ENCODE measurements at regions of chr15 and their contacts with region 1.

Region 1: GRCh38 chr15:61921093-61921492 is 139.2 kb downstream of the VPS13C start:
- DNase-seq: peak; percentile 36
- ATAC-seq: no peak; the same call in none of the 2 replicates
- H3K4me3 ChIP-seq: no peak overlapping the region
- H3K27ac ChIP-seq: no peak overlapping the region
- H3K4me1 ChIP-seq: peaks cover 9% of the 10 kb centered on the region; the same call in 1 of the 2 replicates
- H3K27me3 ChIP-seq: no peaks in the 10 kb centered on the region
- CTCF ChIP-seq: no peak

Region 2: DNA sequence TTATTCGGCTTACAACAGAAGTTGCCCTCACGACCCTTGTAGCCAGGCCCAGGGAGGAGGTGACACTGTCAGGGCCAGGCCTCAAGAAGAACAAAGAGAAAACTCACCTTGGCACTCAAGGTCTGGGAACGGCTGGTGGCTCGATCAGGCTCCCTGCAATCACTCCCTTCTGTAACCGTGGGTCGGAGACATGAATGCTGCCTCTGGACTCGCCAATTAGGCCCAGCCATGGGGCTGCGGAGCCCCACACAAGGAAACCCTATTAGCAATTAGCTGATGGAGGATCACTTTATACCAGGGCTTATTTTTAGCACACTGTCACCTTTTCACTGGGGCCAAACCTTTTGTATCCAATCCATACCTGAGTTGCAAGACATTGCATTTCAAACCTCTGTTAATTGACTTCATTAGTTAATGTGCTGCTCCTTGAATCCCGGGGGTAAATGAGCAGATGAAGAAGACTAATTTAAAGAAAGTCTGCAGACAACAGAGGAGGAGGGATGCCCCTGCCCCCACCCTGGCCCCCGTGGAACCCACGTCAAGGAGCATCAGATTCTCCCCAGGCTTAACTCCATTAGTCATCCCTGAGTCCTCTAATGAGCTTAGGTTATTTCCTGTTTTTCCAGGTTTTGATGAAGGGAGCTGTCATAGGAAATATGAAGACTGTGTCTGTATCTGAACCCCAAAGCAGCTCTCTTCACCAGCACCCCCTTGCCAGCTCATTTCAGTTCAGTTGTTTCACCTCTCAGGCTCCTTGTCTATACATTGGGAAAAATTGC is 947.3 kb before region 1 on chr15:
- CTCF ChIA-PET with region 1: no interaction called
- POLR2A ChIA-PET with region 1: no interaction called
- intact Hi-C with region 1: no loop called
- DNase-seq: peak; percentile 18
- ATAC-seq: no peak
- H3K4me3 ChIP-seq: no peak overlapping the region
- H3K27ac ChIP-seq: 0 out of 2 replicates have a peak overlapping the region, but pooled peaks have one; percentile 16
- H3K4me1 ChIP-seq: peaks cover 8% of the 10 kb centered on the region; the same call in 1 of the 2 replicates
- H3K27me3 ChIP-seq: no peaks in the 10 kb centered on the region
- CTCF ChIP-seq: no peak

Region 3: GRCh38 chr15:61879219-61879618 is 41.9 kb before region 1 on chr15:
- CTCF ChIA-PET with region 1: no interaction called
- POLR2A ChIA-PET with region 1: no interaction called
- intact Hi-C with region 1: loop called (anchors 5 kb)
- DNase-seq: peak; percentile 95
- ATAC-seq: peak; percentile 95
- H3K4me3 ChIP-seq: no peak overlapping the region
- H3K27ac ChIP-seq: peak overlapping the region; percentile 62
- H3K4me1 ChIP-seq: peaks cover 17% of the 10 kb centered on the region
- H3K27me3 ChIP-seq: no peaks in the 10 kb centered on the region
- CTCF ChIP-seq: no peak